ENCODE measurements at regions of chrX and their contacts with region 1.

Region 1: DNA sequence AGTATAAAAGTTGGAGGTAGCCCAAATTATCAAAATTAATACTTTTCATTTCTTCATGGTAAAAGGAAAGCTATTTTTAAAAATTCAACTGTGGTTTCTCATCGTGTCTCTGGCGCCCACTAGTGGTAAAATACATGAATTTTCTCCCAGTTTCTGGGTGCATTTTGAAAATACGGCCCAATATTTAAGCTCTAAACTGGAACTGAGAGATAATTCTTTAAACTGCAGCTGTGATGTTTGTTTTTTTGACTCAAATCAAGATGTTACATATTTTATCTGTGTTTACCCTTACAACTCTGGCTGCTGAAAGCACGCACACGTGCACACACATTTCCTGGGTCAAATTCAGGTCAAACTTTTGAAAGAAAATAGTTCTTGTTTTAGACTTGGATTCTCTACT is 123.9 kb upstream of the ACSL4 start:
- DNase-seq: peak in 3 of 35 experiments; percentile 3 to 62 (median 13)
- ATAC-seq: no peak
- H3K4me3 ChIP-seq: no peak overlapping the region
- H3K4me3 Mint-ChIP-seq: no peak overlapping the region
- H3K27ac ChIP-seq: no peak overlapping the region
- H3K27ac Mint-ChIP-seq: no peak overlapping the region
- H3K4me1 ChIP-seq: no peaks in the 10 kb centered on the region
- H3K4me1 Mint-ChIP-seq: peaks cover 0 to 3% (median 2%) of the 10 kb centered on the region in 3 donors
- H3K27me3 ChIP-seq: no peaks in the 10 kb centered on the region
- H3K27me3 Mint-ChIP-seq: peaks cover 0 to 4% of the 10 kb centered on the region in 2 donors

Region 2: GRCh38 chrX:109485470-109486340 is 371.3 kb before region 1 on chrX:
- CTCF ChIA-PET with region 1: interaction called, 3 to 11 read pairs
- POLR2A ChIA-PET with region 1: no interaction called
- DNase-seq: peak; percentile 5 to 78 (median 48)
- ATAC-seq: peak; percentile 53 to 73 (median 63)
- H3K4me3 ChIP-seq: no peak overlapping the region
- H3K4me3 Mint-ChIP-seq: no peak overlapping the region
- H3K27ac ChIP-seq: no peak overlapping the region
- H3K27ac Mint-ChIP-seq: no peak overlapping the region
- H3K4me1 ChIP-seq: no peaks in the 10 kb centered on the region
- H3K4me1 Mint-ChIP-seq: no peaks in the 10 kb centered on the region
- H3K27me3 ChIP-seq: no peaks in the 10 kb centered on the region
- H3K27me3 Mint-ChIP-seq: peaks cover 2 to 28% of the 10 kb centered on the region in 2 donors

Region 3: DNA sequence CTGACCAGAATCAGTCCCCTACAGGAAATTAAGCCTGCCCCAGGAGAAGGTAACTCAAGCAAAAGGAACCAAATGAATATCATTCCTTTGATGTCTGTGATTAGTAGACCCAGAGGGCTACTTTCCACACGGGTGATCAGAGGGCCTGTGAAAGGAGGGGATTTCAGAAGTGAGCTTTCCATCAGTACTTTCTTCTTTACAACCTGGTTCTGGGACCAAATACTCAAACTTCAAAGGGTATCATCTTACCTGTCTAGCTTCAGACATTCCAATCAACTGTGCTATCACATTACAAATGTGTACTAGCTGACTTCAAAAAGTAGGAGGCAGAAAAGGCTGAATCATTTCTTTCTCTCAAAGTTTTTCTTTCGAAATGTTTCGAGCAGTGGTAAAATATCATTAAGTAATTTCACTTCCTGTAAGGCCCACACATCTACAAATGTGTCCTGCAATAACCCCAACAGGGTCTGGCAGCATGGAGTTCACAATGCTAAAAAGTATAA is 147.8 kb before region 1 on chrX:
- CTCF ChIA-PET with region 1: interaction called, 16 to 110 read pairs
- POLR2A ChIA-PET with region 1: interaction called, 4 read pairs
- DNase-seq: peak in 1 of 35 experiments; percentile 10
- ATAC-seq: peak in 1 of 4 experiments; percentile 39
- H3K4me3 ChIP-seq: no peak overlapping the region
- H3K4me3 Mint-ChIP-seq: peak overlapping the region in 2 of 3 donors; percentile 7 to 55
- H3K27ac ChIP-seq: peak overlapping the region; percentile 17
- H3K27ac Mint-ChIP-seq: peak overlapping the region in 1 of 2 donors; percentile 28
- H3K4me1 ChIP-seq: peaks cover 0 to 11% of the 10 kb centered on the region in 2 experiments
- H3K4me1 Mint-ChIP-seq: peaks cover 41 to 64% (median 50%) of the 10 kb centered on the region in 3 donors
- H3K27me3 ChIP-seq: no peaks in the 10 kb centered on the region
- H3K27me3 Mint-ChIP-seq: peaks cover 0 to 4% of the 10 kb centered on the region in 2 donors

Region 4: GRCh38 chrX:110021180-110022022 is 164.4 kb after region 1 on chrX:
- CTCF ChIA-PET with region 1: no interaction called
- POLR2A ChIA-PET with region 1: no interaction called
- DNase-seq: no peak
- ATAC-seq: no peak
- H3K4me3 ChIP-seq: no peak overlapping the region
- H3K4me3 Mint-ChIP-seq: no peak overlapping the region
- H3K27ac ChIP-seq: no peak overlapping the region
- H3K27ac Mint-ChIP-seq: no peak overlapping the region
- H3K4me1 ChIP-seq: no peaks in the 10 kb centered on the region
- H3K4me1 Mint-ChIP-seq: peaks cover 0 to 18% (median 7%) of the 10 kb centered on the region in 3 donors
- H3K27me3 ChIP-seq: no peaks in the 10 kb centered on the region
- H3K27me3 Mint-ChIP-seq: no peaks in the 10 kb centered on the region

Region 5: GRCh38 chrX:110146521-110146920 is 289.5 kb after region 1 on chrX:
- CTCF ChIA-PET with region 1: no interaction called
- POLR2A ChIA-PET with region 1: no interaction called
- DNase-seq: peak in 14 of 35 experiments; percentile 0 to 58 (median 10)
- ATAC-seq: peak in 3 of 4 experiments; percentile 41 to 60 (median 58)
- H3K4me3 ChIP-seq: no peak overlapping the region
- H3K4me3 Mint-ChIP-seq: no peak overlapping the region
- H3K27ac ChIP-seq: no peak overlapping the region
- H3K27ac Mint-ChIP-seq: no peak overlapping the region
- H3K4me1 ChIP-seq: peaks cover 0 to 4% of the 10 kb centered on the region in 2 experiments
- H3K4me1 Mint-ChIP-seq: peaks cover 0 to 11% (median 3%) of the 10 kb centered on the region in 3 donors
- H3K27me3 ChIP-seq: no peaks in the 10 kb centered on the region
- H3K27me3 Mint-ChIP-seq: peaks cover 0 to 7% of the 10 kb centered on the region in 2 donors